Activated B cell treated with CpG ODN at 0.5 μM for 24 hours (primary cell): ENCODE measurements at regions of chr2 and their contacts with region 1.

Region 1: DNA sequence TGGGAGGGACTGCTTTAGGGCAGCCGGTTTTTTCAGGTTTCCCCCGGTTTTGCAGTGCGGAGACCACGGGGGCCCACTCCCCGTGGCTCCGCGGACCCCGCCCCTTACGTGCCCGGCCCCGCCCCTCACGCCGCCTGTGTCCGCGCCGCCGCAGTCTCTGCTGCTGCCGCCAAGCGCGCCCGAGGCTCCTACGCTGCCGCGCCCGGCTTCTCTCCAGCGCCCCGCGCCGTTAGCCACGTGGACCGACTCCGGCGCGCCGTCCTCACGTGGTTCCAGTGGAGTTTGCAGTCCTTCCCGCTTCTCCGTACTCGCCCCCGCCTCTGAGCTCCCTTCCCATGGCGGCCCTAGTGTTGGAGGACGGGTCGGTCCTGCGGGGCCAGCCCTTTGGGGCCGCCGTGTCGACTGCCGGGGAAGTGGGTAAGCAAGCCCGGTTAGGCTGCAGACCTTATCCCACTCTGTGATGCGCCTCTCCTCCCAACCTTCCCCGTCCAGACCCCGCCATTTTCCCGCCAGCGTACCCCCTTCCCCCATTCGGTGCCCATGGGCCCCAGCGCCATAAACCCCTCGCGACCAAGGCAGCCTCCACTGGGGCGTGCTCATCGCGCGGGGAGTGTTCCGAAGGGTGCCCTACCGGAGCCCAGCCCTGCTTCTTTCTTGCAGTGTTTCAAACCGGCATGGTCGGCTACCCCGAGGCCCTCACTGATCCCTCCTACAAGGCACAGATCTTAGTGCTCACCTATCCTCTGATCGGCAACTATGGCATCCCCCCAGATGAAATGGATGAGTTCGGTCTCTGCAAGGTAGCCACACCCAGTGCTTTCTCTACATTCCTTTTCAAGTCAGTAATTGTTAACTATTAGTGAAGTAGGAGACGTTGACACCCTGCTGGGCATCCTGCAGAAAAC is at the start of gene CAD:
- DNase-seq: peak; percentile 86
- ATAC-seq: peak; percentile 85
- H3K4me3 Mint-ChIP-seq: peak within 1 kb of the TSS; percentile 93
- H3K27ac Mint-ChIP-seq: peak within 1 kb of the TSS; percentile 87
- H3K4me1 Mint-ChIP-seq: peaks cover 45% of the 10 kb centered on the region
- H3K27me3 Mint-ChIP-seq: no peaks in the 10 kb centered on the region
- CTCF ChIP-seq: no peak
- total RNA-seq, gene CAD: 55.9 and 64.1 TPM in 2 replicates

Region 2: GRCh38 chr2:26785431-26786206 is 431.9 kb before region 1 on chr2 and contains the start of gene CENPA:
- CTCF ChIA-PET with region 1: no interaction called
- POLR2A ChIA-PET with region 1: no interaction called
- intact Hi-C with region 1: loop called (anchors 5 kb)
- DNase-seq: peak; percentile 87
- ATAC-seq: peak; percentile 99
- H3K4me3 Mint-ChIP-seq: peak within 1 kb of the TSS; percentile 84
- H3K27ac Mint-ChIP-seq: peak within 1 kb of the TSS; percentile 65
- H3K4me1 Mint-ChIP-seq: peaks cover 15% of the 10 kb centered on the region
- H3K27me3 Mint-ChIP-seq: peaks cover 3% of the 10 kb centered on the region
- CTCF ChIP-seq: no peak
- total RNA-seq, gene CENPA: 0.42 TPM in 2 replicates

Region 3: GRCh38 chr2:27032495-27033252 is 184.8 kb before region 1 on chr2 and contains the start of gene TMEM214:
- CTCF ChIA-PET with region 1: no interaction called
- POLR2A ChIA-PET with region 1: no interaction called
- intact Hi-C with region 1: loop called (anchors 1 kb)
- DNase-seq: peak; percentile 76
- ATAC-seq: peak; percentile 95
- H3K4me3 Mint-ChIP-seq: peak within 1 kb of the TSS; percentile 93
- H3K27ac Mint-ChIP-seq: peak within 1 kb of the TSS; percentile 80
- H3K4me1 Mint-ChIP-seq: peaks cover 32% of the 10 kb centered on the region
- H3K27me3 Mint-ChIP-seq: no peaks in the 10 kb centered on the region
- CTCF ChIP-seq: no peak
- total RNA-seq, gene TMEM214: 84.4 and 92.1 TPM in 2 replicates

Region 4: DNA sequence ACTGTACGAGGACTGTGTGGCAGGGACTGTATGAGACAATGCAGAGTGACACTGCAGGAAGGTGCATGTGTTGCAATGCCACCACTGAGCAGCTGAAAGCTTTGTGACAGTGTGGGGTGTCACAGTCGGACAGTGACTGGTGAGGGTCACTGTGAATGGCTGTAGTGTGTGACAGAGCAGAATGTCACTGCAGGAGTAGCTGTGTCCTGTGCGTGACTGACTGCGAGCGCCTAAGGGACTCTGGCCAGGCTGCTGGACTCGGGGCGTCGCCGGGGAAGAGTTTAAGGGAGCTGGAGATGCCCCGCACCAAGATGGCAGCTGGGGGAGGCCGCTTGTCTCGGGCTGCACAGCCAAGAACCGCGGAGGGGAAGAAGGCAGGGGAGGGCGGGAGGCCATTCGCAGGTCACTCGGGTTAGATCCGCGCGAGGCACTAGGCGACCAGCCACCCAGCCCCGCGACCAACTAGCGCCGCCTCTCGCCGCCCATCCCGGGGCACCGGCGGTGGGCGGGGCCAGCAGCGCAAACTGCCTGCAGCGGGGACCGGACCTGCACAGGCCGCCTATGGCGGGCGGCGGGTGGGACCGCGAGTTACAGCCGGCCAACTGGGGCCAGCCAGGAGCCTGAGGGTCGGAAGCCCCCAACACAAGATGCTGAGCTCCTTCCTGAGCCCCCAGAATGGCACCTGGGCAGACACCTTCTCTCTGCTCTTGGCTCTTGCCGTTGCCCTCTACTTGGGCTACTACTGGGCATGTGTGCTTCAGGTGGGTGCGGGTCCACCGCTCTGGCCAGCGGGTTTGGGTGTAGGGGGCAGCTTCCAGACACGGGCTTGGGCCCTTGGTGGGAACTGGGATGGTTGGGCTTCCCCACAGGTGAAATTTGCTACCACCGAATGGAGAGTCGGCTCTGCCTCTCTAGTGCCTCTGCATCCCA is 93.9 kb before region 1 on chr2 and contains the start of gene ABHD1:
- CTCF ChIA-PET with region 1: no interaction called
- POLR2A ChIA-PET with region 1: interaction called, 4 read pairs
- intact Hi-C with region 1: loop called (anchors 1 kb)
- DNase-seq: peak; percentile 69
- ATAC-seq: peak; percentile 89
- H3K4me3 Mint-ChIP-seq: peak within 1 kb of the TSS; percentile 89
- H3K27ac Mint-ChIP-seq: peak within 1 kb of the TSS; percentile 43
- H3K4me1 Mint-ChIP-seq: peaks cover 15% of the 10 kb centered on the region
- H3K27me3 Mint-ChIP-seq: peaks cover 22% of the 10 kb centered on the region
- CTCF ChIP-seq: no peak
- total RNA-seq, gene ABHD1: 0.20 and 1.1 TPM in 2 replicates

Region 5: GRCh38 chr2:27582695-27583389 is 365.4 kb after region 1 on chr2 and contains the start of gene ZNF512:
- CTCF ChIA-PET with region 1: no interaction called
- POLR2A ChIA-PET with region 1: no interaction called
- intact Hi-C with region 1: loop called (anchors 2 kb)
- DNase-seq: peak; percentile 81
- ATAC-seq: peak; percentile 95
- H3K4me3 Mint-ChIP-seq: peak within 1 kb of the TSS; percentile 97
- H3K27ac Mint-ChIP-seq: peak within 1 kb of the TSS; percentile 90
- H3K4me1 Mint-ChIP-seq: peaks cover 48% of the 10 kb centered on the region
- H3K27me3 Mint-ChIP-seq: peaks cover 4% of the 10 kb centered on the region
- CTCF ChIP-seq: no peak
- total RNA-seq, gene ZNF512: 45.4 and 48.7 TPM in 2 replicates